CD8-positive, alpha-beta memory T cell (primary cell): ENCODE measurements at regions of chr1 and their contacts with region 1.

Region 1: GRCh38 chr1:204506961-204507387 is 9.2 kb upstream of the MDM4 start:
- DNase-seq: peak; percentile 67 to 93 (median 91)
- H3K4me3 ChIP-seq: peak overlapping the region; percentile 67
- H3K4me3 Mint-ChIP-seq: peak overlapping the region; percentile 89 to 95 (median 93)
- H3K27ac ChIP-seq: peak overlapping the region; percentile 93
- H3K27ac Mint-ChIP-seq: peak overlapping the region; percentile 94 to 100 (median 98)
- H3K4me1 ChIP-seq: peaks cover 22% of the 10 kb centered on the region
- H3K4me1 Mint-ChIP-seq: peaks cover 30 to 46% (median 42%) of the 10 kb centered on the region in 3 donors
- H3K27me3 ChIP-seq: no peaks in the 10 kb centered on the region
- H3K27me3 Mint-ChIP-seq: peaks cover 0 to 13% of the 10 kb centered on the region in 2 donors

Region 2: DNA sequence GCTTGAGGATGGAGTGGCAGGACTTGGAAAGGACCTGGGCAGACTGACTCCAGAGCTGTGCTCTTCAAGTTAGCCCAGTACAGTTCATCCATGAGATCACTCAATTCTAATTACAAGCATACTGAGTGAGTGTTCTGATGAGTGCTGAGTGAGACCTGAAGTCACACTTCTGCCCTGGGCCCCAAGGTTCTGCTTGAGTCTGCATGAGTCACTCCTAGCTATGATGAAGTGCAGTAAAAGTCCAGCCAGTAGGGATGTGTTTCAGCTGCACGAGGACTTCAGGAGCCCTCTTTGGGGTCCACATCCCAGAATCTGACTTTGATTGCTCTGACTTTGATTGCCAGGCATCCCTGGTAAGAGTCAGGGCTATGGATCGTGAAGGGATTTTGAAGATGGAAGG is 183.1 kb before region 1 on chr1:
- CTCF ChIA-PET with region 1: no interaction called
- POLR2A ChIA-PET with region 1: no interaction called
- DNase-seq: no peak
- H3K4me3 ChIP-seq: no peak overlapping the region
- H3K4me3 Mint-ChIP-seq: no peak overlapping the region
- H3K27ac ChIP-seq: no peak overlapping the region
- H3K27ac Mint-ChIP-seq: no peak overlapping the region
- H3K4me1 ChIP-seq: no peaks in the 10 kb centered on the region
- H3K4me1 Mint-ChIP-seq: no peaks in the 10 kb centered on the region
- H3K27me3 ChIP-seq: no peaks in the 10 kb centered on the region
- H3K27me3 Mint-ChIP-seq: peaks cover 6 to 12% of the 10 kb centered on the region in 2 donors

Region 3: DNA sequence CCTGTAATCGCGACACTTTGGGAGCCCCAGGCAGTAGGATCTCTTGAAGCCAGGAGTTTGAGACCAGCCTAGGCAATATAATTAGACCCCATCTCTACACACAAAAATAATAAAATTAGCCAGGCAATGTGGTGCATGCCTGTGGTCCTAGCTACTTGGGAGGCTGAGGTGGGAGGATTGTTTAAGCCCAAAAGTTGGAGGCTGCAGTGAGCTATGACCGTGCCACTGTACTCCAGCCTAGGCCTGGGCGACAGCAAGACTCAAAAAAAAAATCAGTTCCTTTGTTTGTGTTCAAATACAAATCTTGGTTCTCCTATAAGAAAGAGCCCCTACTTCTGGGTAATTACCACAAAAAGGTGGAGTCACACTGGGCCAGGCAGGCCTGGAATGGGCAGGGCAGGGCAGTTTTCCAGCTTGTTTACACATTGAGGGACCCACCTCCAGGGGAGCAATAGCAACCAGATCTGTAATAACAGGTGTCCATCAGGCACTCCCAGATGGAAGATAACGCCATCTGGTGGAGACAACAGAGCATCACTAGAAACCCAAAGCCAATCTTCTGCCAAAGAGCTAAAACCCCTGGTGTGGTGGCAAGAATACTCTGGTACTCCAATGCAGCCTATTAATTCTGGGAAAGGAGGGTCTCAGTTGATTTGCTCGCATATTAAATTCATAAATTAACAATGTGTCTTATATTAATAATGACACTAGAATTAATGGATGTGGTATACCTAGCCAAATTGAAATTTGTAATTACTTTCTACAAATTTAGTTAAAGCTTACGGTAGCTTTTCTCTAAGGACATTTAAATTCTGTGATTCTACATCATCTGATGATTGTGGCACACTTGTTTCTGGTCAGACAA is 108.5 kb before region 1 on chr1:
- CTCF ChIA-PET with region 1: interaction called, 11 read pairs
- POLR2A ChIA-PET with region 1: no interaction called
- DNase-seq: peak in 4 of 5 donors; percentile 39 to 73 (median 64)
- H3K4me3 ChIP-seq: no peak overlapping the region
- H3K4me3 Mint-ChIP-seq: no peak overlapping the region
- H3K27ac ChIP-seq: no peak overlapping the region
- H3K27ac Mint-ChIP-seq: peak overlapping the region; percentile 64 to 90 (median 78)
- H3K4me1 ChIP-seq: no peaks in the 10 kb centered on the region
- H3K4me1 Mint-ChIP-seq: peaks cover 3 to 25% (median 7%) of the 10 kb centered on the region in 3 donors
- H3K27me3 ChIP-seq: no peaks in the 10 kb centered on the region
- H3K27me3 Mint-ChIP-seq: no peaks in the 10 kb centered on the region

Region 4: GRCh38 chr1:204438628-204439027 is 68.3 kb before region 1 on chr1:
- CTCF ChIA-PET with region 1: interaction called, 496 read pairs
- POLR2A ChIA-PET with region 1: no interaction called
- DNase-seq: no peak
- H3K4me3 ChIP-seq: no peak overlapping the region
- H3K4me3 Mint-ChIP-seq: no peak overlapping the region
- H3K27ac ChIP-seq: no peak overlapping the region
- H3K27ac Mint-ChIP-seq: peak overlapping the region in 1 of 8 donors; percentile 34
- H3K4me1 ChIP-seq: no peaks in the 10 kb centered on the region
- H3K4me1 Mint-ChIP-seq: no peaks in the 10 kb centered on the region
- H3K27me3 ChIP-seq: no peaks in the 10 kb centered on the region
- H3K27me3 Mint-ChIP-seq: no peaks in the 10 kb centered on the region

Region 5: GRCh38 chr1:204523605-204524215 is 16.7 kb after region 1 on chr1:
- CTCF ChIA-PET with region 1: interaction called, 10 read pairs
- POLR2A ChIA-PET with region 1: interaction called, 9 read pairs
- DNase-seq: no peak
- H3K4me3 ChIP-seq: no peak overlapping the region
- H3K4me3 Mint-ChIP-seq: peak overlapping the region in 5 of 7 donors; percentile 31 to 58 (median 54)
- H3K27ac ChIP-seq: no peak overlapping the region
- H3K27ac Mint-ChIP-seq: peak overlapping the region; percentile 13 to 96 (median 62)
- H3K4me1 ChIP-seq: peaks cover 64% of the 10 kb centered on the region
- H3K4me1 Mint-ChIP-seq: peaks cover 19 to 65% (median 45%) of the 10 kb centered on the region in 3 donors
- H3K27me3 ChIP-seq: no peaks in the 10 kb centered on the region
- H3K27me3 Mint-ChIP-seq: no peaks in the 10 kb centered on the region

Region 6: DNA sequence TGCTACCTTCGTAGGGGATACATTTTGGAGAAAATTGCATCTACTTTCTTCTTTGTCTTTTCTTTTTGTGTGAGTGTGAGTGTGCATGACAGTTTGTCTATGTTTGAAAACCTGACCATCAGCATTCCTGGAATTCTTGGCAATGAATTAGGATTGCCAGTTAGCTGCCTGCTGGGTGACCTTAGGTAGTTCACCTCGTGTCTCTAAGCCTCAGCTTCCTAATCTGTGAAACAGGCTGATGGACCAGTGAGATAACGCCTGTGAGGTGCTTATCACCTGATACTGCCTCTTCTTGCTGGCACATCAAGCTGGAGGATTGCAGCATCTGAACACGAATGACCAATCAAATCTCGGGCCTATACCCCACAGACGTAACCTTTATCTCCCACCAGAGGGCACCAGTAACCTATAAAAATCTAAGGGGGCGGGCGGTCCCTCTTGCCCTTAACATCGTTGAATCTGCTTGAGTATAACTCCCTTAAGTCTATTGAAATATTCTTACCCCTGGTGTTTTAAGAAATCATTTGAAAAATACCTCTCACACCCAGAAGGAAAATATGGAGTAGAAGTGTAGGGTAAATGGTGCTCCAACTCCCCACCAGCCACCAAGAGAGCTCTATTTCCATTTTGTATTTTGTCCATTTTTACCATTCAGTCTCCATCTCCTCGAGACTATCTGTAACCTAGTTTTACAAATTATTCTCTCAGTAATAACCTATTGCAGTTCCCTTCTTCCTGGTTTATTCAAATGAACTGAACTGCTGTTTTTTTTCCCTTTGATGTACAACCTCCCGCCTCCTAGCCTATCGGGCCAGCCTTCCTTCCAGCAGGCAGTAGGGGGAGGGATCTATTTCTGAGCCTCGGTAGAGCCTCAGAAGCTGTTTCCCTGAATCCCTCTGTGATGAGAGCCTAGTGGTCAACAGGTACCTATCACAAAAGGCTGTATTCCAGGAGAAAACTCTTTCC is 58.9 kb after region 1 on chr1:
- CTCF ChIA-PET with region 1: interaction called, 11 read pairs
- POLR2A ChIA-PET with region 1: interaction called, 3 read pairs
- DNase-seq: peak; percentile 19 to 71 (median 59)
- H3K4me3 ChIP-seq: no peak overlapping the region
- H3K4me3 Mint-ChIP-seq: peak overlapping the region in 2 of 7 donors; percentile 18 to 47
- H3K27ac ChIP-seq: no peak overlapping the region
- H3K27ac Mint-ChIP-seq: peak overlapping the region; percentile 33 to 92 (median 79)
- H3K4me1 ChIP-seq: peaks cover 34% of the 10 kb centered on the region
- H3K4me1 Mint-ChIP-seq: peaks cover 29 to 44% (median 36%) of the 10 kb centered on the region in 3 donors
- H3K27me3 ChIP-seq: no peaks in the 10 kb centered on the region
- H3K27me3 Mint-ChIP-seq: no peaks in the 10 kb centered on the region